ENCODE measurements at regions of chr6 and their contacts with region 1.

Region 1: DNA sequence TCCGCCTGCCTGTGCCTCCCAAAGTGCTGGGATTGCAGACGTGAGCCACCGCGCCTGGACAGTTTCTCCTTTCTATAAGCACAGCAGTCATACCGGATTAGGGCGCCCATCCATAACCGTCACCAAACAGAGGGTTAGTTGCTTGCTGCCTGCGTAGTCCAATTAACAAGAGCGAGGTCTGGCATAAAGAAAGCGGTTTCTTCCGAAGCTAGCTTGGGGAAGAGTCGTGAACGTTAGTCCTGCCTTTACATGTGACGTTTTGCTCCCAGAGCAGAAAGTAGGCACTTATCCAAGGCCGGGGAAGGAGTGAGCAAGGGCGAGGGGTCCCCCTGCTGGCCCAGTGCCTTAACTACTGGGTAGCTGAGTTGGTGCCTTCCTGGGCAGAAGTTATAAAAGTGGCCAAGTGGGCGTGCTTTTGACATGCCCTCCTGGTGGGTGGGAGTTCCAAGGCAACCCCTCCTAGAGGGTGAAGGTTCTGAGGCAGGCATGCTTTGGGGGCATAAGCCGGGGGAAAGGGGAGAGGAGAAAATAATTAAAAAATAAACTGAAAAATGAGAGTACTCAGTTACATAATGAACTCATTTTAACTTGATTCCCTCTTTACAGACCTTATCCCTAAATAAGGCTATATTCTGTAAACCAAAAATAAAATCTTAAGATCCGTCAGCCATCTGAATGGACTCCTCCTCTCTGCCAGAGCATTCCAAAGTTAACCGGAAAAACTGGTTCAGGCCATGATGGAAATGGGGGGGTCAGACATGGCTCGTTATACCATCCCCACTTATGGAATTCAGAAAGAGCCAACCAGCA is 88.0 kb downstream of the FAM217A start:
- DNase-seq: peak; percentile 72
- ATAC-seq: peak; percentile 85
- H3K4me3 ChIP-seq: no peak overlapping the region
- H3K4me3 Mint-ChIP-seq: no peak overlapping the region
- H3K27ac ChIP-seq: no peak overlapping the region
- H3K27ac Mint-ChIP-seq: no peak overlapping the region
- H3K4me1 ChIP-seq: peaks cover 0 to 5% of the 10 kb centered on the region in 2 donors
- H3K4me1 Mint-ChIP-seq: peaks cover 5% of the 10 kb centered on the region
- H3K27me3 ChIP-seq: no peaks in the 10 kb centered on the region
- H3K27me3 Mint-ChIP-seq: no peaks in the 10 kb centered on the region
- CTCF ChIP-seq: peak; percentile 81

Region 2: DNA sequence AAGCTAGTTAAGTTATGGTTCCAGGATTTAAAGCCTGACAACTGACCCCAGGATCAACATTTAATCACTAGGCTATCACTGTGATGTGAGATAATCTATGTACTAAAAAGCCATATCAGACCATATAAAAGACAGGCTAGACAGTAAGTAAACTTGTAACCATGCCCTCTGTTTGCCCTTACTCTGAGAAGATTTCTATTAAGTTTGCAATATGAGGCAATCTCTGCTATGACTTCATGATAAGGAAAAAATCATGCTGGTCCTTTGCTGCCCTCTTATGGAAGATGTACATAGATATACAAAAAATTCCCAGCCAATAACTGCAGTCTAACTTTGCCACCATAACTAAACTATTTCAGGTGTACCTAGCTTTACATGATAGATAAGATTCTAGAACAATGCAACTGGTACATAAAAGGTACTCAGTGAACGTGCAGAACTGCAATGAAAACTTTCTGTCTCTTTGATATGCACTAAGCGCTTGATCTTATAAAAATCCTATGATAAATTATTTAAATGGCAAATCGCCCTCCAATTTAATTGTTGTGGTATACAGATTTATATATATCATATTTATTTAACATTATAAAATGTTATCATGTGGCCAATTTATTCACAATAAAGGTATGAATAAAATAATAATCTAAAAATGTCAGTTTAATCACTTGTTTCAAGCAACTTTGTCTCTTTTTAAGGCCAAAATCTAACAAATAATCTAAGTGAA is 17.6 kb after region 1 on chr6:
- CTCF ChIA-PET with region 1: interaction called, 13 read pairs
- POLR2A ChIA-PET with region 1: interaction called, 6 read pairs
- intact Hi-C with region 1: no loop called
- DNase-seq: peak; percentile 67
- ATAC-seq: peak; percentile 58
- H3K4me3 ChIP-seq: no peak overlapping the region
- H3K4me3 Mint-ChIP-seq: no peak overlapping the region
- H3K27ac ChIP-seq: no peak overlapping the region
- H3K27ac Mint-ChIP-seq: no peak overlapping the region
- H3K4me1 ChIP-seq: peaks cover 5 to 6% of the 10 kb centered on the region in 2 donors
- H3K4me1 Mint-ChIP-seq: peaks cover 30% of the 10 kb centered on the region
- H3K27me3 ChIP-seq: no peaks in the 10 kb centered on the region
- H3K27me3 Mint-ChIP-seq: no peaks in the 10 kb centered on the region
- CTCF ChIP-seq: peak; percentile 72